Colonic mucosa (tissue), 4 donors: ENCODE measurements at regions of chr3 and their contacts with region 1.

Region 1: GRCh38 chr3:69197455-69198185 is 75.2 kb upstream of the LMOD3 start:
- DNase-seq: no peak
- H3K4me3 ChIP-seq: no peak overlapping the region
- H3K27ac ChIP-seq: no peak overlapping the region
- H3K4me1 ChIP-seq: no peaks in the 10 kb centered on the region
- H3K27me3 ChIP-seq: no peaks in the 10 kb centered on the region
- CTCF ChIP-seq: no peak

Region 2: GRCh38 chr3:69248436-69248835 is 50.8 kb after region 1 on chr3:
- intact Hi-C with region 1: loop called (anchors 5 kb)
- DNase-seq: peak; percentile 22
- H3K4me3 ChIP-seq: no peak overlapping the region
- H3K27ac ChIP-seq: no peak overlapping the region
- H3K4me1 ChIP-seq: no peaks in the 10 kb centered on the region
- H3K27me3 ChIP-seq: no peaks in the 10 kb centered on the region
- CTCF ChIP-seq: no peak